ENCODE measurements at regions of chr6 and their contacts with region 1.

Region 1: GRCh38 chr6:26054857-26055669 is 32.2 kb upstream of the HFE start:
- DNase-seq: peak; percentile 85
- ATAC-seq: peak; percentile 91

Region 2: GRCh38 chr6:26103770-26104456 is 48.9 kb after region 1 on chr6:
- intact Hi-C with region 1: loop called (anchors 2 kb)
- DNase-seq: peak; percentile 88
- ATAC-seq: peak; percentile 95

Measured in Right ventricle myocardium inferior (tissue), 1 donor.